ENCODE measurements at regions of chr15 and their contacts with region 1.

Region 1: DNA sequence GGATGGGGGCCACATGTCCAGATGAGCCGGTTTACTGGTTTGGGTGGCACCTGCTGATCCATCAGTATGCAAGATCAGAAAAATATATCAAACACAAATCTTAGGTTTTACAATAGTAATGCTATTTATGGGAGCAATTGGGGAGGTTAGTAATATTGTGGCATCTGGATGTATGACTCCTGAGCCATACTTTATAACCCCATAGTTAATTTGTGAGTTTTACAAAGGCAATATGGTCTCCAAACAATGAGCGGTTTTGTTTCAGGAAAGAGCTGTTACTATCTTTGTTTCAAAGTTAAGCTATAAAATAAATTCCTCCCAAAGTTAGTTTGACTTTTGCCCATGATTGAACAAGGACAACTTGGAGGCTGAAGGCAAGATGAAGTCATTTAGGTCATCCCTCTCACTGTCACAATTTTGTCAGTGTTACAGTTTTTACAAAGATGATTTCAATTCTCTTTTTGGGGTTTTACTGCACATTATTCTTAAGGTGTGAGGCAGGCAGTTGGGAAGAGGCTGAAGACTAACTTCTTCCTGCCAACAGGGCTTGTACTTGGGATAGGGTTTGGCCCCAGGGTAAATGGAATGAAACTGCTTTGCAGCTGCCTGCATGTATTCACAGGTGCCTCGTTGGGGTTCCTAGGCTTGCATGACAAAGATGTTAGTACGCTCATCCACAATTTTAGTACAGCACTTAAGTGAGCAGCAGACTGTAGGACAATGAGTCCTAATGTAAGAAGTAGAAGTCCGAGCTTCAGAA is 296.6 kb upstream of the NDN start:
- DNase-seq: no peak
- ATAC-seq: no peak
- H3K4me3 ChIP-seq: no peak overlapping the region
- H3K27ac ChIP-seq: no peak overlapping the region
- H3K4me1 ChIP-seq: no peaks in the 10 kb centered on the region
- H3K27me3 ChIP-seq: no peaks in the 10 kb centered on the region
- CTCF ChIP-seq: no peak
- POLR2A ChIP-seq: no peak

Region 2: DNA sequence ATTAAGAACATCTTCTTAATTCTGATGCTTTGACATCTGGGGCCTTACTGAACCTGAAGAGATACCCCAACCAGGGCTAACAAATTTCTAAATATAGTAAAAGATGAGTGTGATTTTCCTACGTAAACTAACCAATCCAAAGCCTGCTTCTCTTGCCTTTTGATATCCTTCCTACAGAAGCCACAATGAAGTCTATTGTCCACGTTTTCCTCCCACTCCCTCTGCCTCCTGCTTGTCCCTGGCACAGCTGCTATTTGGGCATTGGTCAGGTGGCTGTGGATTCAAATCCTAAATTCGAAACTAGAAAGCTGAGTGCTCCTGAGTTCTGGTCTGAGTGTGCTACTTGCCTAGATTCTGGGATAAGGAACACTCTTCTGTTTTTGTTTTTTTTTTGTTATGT is 435.6 kb before region 1 on chr15:
- intact Hi-C with region 1: no loop called
- DNase-seq: no peak
- ATAC-seq: no peak
- H3K4me3 ChIP-seq: no peak overlapping the region
- H3K27ac ChIP-seq: no peak overlapping the region
- H3K4me1 ChIP-seq: no peaks in the 10 kb centered on the region
- H3K27me3 ChIP-seq: no peaks in the 10 kb centered on the region
- CTCF ChIP-seq: no peak
- POLR2A ChIP-seq: no peak

Region 3: DNA sequence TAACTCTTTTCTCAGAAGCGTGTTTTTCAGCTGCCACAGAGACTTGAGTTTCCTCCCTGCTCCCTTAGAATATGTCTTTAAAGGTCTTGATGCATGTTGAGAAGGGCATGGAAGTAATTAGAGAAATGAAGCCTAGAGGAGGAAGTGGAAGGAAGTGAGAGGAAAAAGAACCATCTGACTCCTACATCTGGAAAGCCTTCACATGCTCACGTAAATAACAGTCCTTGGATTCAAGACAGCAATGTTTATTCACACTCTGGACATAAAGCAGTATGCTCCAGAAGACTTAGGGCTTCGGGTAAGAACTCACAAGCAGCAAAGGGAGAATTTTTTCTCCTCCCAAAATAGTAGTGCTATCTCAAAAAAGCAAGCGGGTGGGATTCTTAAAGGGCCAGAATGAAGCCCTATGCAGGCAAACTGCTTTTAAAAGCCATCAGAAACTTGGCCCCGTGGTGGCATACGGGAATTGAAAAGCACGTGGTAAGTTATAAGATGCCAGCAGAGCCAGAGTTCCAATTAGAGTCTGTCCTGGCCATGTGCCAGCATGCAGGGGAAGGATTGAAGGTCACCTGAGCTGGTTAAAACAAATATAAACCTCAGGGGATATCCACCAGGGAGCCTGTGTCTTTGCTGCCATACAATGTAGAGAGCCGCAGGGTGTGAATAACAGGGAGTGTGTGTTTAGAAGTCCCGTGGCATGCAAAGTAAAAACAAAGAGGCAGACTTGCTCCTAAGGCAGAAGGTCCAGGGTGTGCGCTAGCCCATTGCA is 84.2 kb after region 1 on chr15:
- intact Hi-C with region 1: loop called in 1 of 10 experiments (anchors 10 kb)
- DNase-seq: peak in 1 of 5 donors; percentile 27
- ATAC-seq: no peak
- H3K4me3 ChIP-seq: no peak overlapping the region
- H3K27ac ChIP-seq: no peak overlapping the region
- H3K4me1 ChIP-seq: no peaks in the 10 kb centered on the region
- H3K27me3 ChIP-seq: no peaks in the 10 kb centered on the region
- CTCF ChIP-seq: no peak
- POLR2A ChIP-seq: no peak

Region 4: GRCh38 chr15:24848050-24848449 is 864.4 kb after region 1 on chr15:
- intact Hi-C with region 1: no loop called
- DNase-seq: peak; percentile 37 to 68 (median 57)
- ATAC-seq: peak; percentile 83 to 90 (median 86)
- H3K4me3 ChIP-seq: peak overlapping the region in 10 of 12 donors; percentile 25 to 56 (median 40)
- H3K27ac ChIP-seq: peak overlapping the region in 8 of 12 donors; percentile 32 to 72 (median 57)
- H3K4me1 ChIP-seq: no peaks in the 10 kb centered on the region
- H3K27me3 ChIP-seq: no peaks in the 10 kb centered on the region
- CTCF ChIP-seq: no peak
- POLR2A ChIP-seq: no peak